ENCODE measurements at regions of chr12 and their contacts with region 1.

Region 1: DNA sequence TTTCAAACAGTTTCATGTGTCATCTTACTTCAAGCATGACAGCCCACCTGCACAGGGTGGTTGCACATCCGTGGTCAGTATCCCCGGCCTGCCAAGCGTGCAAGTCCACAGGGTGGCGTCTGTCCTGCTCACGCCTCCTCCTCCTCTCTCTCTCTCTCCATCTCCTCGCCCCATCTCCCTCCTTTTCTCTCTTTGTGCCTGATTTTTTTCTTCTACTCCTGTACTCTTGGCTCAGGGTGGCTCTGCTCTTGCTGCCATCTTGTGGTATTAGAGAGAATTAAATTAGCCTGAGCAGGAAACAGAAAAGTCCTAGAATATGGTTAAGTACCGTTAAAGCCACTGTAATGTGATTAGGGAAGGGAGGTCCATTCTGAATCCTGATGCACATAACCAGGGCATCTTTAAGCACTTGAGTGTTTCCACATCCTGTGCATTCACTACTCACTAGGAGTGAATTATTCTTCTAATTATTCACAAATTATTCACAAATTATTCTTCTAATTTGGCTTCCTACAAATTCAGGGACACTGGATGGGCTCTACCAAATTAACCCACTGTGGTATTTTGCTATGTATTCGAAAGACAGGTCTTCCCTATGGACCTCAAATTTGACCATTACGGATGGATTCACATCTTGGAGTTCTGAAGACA is 25.5 kb upstream of the DTX1 start:
- DNase-seq: no peak
- H3K4me3 Mint-ChIP-seq: no peak overlapping the region
- H3K27ac Mint-ChIP-seq: no peak overlapping the region
- H3K4me1 Mint-ChIP-seq: peaks cover 5% of the 10 kb centered on the region
- H3K27me3 Mint-ChIP-seq: peaks cover 19% of the 10 kb centered on the region

Region 2: DNA sequence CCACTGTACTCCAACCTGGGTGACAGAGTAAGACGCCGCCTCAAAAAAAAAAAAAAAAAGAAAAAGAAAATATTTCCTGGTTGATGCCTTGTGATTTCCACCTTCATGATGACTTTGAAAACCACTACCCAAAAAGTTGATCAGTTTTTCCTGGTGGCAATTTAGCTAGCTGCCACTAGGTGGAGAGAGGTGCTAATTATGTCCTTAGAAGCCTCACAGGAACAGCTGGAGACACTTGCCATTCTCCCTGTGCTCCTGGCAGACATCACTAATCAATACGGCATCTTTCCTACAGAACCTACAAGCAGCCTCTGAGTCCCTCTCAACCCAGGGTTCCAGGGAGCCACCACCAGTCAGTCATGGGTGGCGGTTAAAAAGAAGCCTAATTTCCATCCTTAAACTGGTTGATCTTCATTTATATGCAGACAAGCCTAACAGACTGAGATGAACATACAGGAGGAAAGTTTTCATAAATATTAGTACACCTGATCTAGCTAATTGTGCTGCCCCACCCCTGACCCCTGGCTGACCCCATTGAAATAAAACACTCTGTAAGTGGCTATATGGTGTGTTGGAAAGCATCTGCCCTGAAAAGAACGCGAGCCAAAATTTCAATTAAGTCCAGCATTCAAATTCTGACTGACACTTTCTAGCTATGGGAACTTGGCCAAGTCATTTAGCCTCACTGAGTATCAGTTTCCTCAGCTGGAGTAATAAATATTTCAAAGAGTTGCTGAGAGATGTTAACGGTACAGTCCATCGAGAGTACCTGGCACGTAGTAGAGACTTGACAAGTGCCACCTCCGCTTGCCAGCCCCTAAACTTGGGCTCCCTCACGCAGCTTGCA is 130.5 kb before region 1 on chr12:
- intact Hi-C with region 1: loop called (anchors 5 kb)
- DNase-seq: peak; percentile 37
- H3K4me3 Mint-ChIP-seq: no peak overlapping the region
- H3K27ac Mint-ChIP-seq: no peak overlapping the region
- H3K4me1 Mint-ChIP-seq: peaks cover 44% of the 10 kb centered on the region
- H3K27me3 Mint-ChIP-seq: peaks cover 8% of the 10 kb centered on the region

Region 3: DNA sequence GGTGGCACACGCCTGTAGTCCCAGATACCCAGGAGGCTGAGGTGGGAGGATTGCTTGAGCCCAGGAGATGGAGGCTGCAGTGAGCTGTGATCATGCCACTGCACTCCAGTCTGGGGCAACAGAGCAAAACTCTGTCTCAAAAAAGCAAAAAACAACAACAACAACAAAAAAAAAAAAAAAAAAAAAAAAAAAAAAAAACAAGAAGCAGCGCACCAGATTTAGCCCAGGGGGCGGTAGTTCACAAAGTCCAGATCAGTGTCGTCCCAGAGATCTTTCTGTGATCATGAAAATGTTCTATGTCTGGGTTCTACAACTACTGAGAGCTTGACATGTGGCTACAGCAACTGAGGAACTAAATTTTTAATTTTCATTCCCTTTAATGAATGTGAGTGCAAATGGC is 25.2 kb before region 1 on chr12:
- intact Hi-C with region 1: no loop called
- DNase-seq: no peak
- H3K4me3 Mint-ChIP-seq: no peak overlapping the region
- H3K27ac Mint-ChIP-seq: no peak overlapping the region
- H3K4me1 Mint-ChIP-seq: peaks cover 6% of the 10 kb centered on the region
- H3K27me3 Mint-ChIP-seq: no peaks in the 10 kb centered on the region

Measured in activated T-helper 1 cell treated with anti-CD3 and anti-CD28 coated beads, Interleukin-12 subunit alpha, Interleukin-12 subunit beta, Interleukin-2, Interleukin-4 antibody, amounts not matched to agents 30 ng/mL and 10 ng/mL and 1 ng/mL, durations not matched to agents 14 hours and 24 hours and 36 hours (primary cell).